ENCODE measurements at regions of chr1 and their contacts with region 1.

Region 1: DNA sequence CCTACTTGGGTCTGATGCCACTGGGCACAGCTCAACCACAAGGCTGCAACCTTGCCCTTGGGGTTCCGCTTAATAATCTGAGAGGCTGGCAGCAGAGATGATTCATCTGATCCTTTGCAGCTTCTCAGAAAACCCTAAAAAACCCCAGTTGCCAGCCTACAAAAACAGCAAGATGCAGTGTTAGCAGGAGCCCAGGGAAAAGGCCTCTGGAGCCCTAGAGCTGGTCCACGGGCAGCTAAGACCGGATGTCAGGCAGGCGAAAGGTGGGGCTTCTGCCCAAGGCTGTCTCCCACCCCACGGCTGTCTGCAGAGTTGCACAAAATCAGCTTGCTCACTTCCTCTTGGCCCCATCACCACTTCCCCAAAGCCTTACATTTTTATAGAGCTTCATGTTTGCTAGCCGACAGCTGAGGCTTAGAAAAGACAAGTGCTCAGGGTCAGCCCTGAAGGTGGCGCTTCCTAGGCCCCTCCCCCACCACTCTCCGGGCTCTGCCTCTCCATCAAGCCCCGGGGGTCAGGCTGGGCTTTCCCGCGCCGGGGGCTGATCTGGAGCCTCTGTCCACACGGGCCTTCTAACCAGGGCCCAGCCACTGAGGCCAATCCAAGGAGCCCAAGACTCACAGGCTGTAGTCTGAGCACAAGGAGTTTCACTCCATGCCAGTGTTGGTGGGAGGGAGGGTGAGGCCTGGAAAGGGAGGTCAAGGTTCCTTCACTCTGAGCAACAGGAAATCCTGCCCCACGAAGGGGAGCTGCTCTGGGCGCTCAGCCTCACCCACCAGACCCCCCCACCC is 4.2 kb upstream of the ADORA3 start:
- DNase-seq: peak; percentile 71
- CTCF ChIP-seq: no peak

Region 2: DNA sequence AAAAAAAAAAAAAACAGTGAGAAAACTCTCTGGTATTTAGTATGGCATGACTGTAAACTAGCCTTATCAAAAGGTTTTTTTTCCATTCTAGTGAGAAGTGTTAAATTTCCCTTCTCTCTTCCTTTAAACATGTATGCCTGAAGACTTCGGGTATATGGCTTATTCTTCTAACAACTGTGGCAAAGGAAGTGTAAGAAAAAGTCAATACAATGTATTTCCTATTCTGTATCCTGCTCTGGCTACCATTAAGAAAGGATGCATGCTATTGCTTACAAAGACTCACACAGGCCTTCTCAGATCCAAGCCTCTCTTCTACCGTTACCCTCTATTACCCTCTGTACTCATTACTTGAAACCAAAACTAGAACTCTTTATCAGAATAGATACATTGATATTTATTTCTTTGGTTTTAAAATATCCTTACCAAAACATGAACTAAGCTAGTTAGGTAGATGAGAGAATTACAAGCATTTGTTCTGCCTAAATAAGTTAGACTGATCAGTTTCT is 359.2 kb before region 1 on chr1:
- in situ Hi-C with region 1: no loop called
- DNase-seq: no peak
- CTCF ChIP-seq: no peak

Region 3: GRCh38 chr1:111660204-111661150 is 152.9 kb after region 1 on chr1:
- in situ Hi-C with region 1: loop called (anchors 10 kb)
- DNase-seq: no peak
- CTCF ChIP-seq: no peak

Region 4: GRCh38 chr1:111747282-111747734 is 239.7 kb after region 1 on chr1:
- in situ Hi-C with region 1: loop called (anchors 10 kb)
- DNase-seq: peak; percentile 75
- CTCF ChIP-seq: peak; percentile 73